Right lobe of liver (tissue), 6 donors: ENCODE measurements at regions of chr10 and their contacts with region 1.

Region 1: GRCh38 chr10:73534857-73535256 is 39.0 kb upstream of the PPP3CB start:
- DNase-seq: no peak
- ATAC-seq: no peak
- H3K4me3 ChIP-seq: no peak overlapping the region
- H3K27ac ChIP-seq: no peak overlapping the region
- H3K4me1 ChIP-seq: no peaks in the 10 kb centered on the region
- H3K27me3 ChIP-seq: no peaks in the 10 kb centered on the region
- CTCF ChIP-seq: no peak
- POLR2A ChIP-seq: no peak

Region 2: GRCh38 chr10:73576178-73576889 is 41.5 kb after region 1 on chr10:
- intact Hi-C with region 1: no loop called
- DNase-seq: peak in 1 of 3 donors; percentile 65
- ATAC-seq: peak; percentile 81 to 92 (median 86)
- H3K4me3 ChIP-seq: no peak overlapping the region
- H3K27ac ChIP-seq: peak overlapping the region in 2 of 3 donors; percentile 33
- H3K4me1 ChIP-seq: peaks cover 0 to 31% (median 8%) of the 10 kb centered on the region in 4 donors
- H3K27me3 ChIP-seq: no peaks in the 10 kb centered on the region
- CTCF ChIP-seq: no peak
- POLR2A ChIP-seq: no peak

Region 3: DNA sequence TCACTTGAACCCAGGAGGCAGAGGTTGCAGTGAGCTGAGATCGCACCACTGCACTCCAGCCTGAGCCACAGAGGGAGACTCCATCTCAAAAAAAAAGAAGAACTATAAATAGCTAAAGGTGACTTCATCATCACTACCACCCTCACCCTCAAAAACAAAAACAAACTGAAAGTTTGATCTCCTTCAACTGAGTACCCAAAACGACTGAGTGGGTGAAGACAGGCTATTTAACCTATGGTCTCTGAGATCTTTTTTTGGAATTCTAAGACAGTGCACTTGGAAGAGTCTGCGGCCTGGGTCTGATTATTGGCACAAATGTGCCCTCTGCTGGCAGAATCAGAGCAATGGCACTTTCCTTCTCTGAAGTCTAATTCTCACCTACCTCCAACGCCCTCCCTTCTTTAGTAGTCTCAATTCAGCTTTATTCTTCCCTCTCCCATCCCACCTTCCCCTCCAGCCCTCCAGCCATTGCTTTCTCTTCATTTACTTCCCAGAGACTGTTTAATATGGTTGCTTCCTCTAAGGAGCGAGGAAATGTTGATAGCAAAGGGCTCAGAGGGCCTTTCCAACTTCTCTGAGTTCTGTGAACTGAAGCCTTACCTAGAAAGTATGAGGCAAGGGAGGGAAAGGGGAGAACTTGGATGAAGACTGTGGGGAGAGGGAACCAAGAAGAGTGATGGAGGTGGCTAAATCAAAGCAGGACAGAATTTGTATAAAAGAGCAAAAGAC is 109.3 kb after region 1 on chr10:
- intact Hi-C with region 1: loop called (anchors 5 kb)
- DNase-seq: no peak
- ATAC-seq: peak; percentile 81 to 92 (median 89)
- H3K4me3 ChIP-seq: no peak overlapping the region
- H3K27ac ChIP-seq: no peak overlapping the region
- H3K4me1 ChIP-seq: peaks cover 0 to 5% (median 0%) of the 10 kb centered on the region in 4 donors
- H3K27me3 ChIP-seq: no peaks in the 10 kb centered on the region
- CTCF ChIP-seq: peak; percentile 86 to 95 (median 88)
- POLR2A ChIP-seq: no peak